GM18951 (cell line): ENCODE measurements at regions of chr1 and their contacts with region 1.

Region 1: DNA sequence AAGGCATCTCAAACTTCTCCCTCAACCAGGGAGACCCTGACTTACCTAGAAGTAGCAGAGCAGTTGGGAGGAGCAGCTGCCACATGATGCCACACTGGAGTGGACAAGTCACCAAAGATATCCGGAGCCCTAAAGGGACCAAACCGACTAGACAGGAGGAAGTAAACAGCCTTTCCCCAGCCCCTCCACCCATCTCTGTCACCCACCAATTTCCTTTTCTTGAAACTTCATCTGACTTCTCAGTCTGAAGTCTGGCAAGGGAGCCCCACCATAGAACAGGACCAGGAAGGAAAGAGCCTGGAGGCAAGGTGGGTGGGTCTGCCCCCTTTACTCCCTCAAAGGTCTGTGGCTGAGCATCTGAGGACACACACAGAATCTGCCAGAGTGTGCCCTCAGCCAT is at the start of gene FCGR3A:
- POLR2A ChIP-seq: no peak

Region 2: DNA sequence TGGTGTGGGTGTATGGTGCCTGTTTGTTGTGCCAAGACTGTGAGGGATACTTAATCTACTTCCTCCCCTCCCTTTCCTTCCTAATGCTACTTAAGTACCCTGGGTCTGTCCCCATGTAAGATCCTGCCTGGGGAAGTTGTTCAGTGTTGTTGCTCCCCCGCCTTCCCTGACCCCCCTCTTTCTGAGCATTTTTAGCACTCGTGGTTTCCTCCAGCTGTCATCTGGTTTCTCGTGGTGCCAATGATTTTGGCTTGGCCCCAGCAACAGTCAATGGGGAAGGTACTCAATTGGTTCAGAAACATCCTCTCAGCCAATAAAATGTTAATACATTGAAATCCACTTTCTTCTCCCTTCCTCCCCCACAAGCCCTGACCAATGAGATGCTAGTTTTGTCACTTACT is 364.4 kb before region 1 on chr1:
- in situ Hi-C with region 1: no loop called
- POLR2A ChIP-seq: peak; percentile 38

Region 3: GRCh38 chr1:161631076-161631475 is 81.4 kb after region 1 on chr1 and contains the start of gene FCGR3B:
- in situ Hi-C with region 1: loop called (anchors 5 kb)
- POLR2A ChIP-seq: no peak

Region 4: DNA sequence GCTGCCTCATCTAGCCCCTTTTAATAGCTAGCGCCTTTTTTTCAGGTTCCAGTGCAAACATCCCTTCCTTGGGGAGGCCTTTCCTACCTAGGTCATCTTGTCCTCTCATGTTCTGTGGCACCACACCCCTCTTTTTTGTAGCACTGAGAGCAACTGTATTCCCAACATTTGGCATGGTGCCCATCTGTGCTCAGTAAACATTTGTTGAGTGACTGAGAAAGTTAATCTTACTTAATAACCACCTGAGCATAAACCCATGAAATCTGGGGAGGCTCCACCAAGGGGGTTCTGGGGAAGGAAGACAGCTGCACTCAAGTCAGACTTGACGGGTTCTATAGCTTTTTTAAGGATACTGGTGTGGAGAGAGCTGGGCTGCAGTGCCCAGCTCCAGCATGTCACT is 609.9 kb after region 1 on chr1:
- in situ Hi-C with region 1: no loop called
- POLR2A ChIP-seq: no peak